Panc1 (cell line): ENCODE measurements at regions of chr9 and their contacts with region 1.

Region 1: GRCh38 chr9:35790385-35791296 is 750 bp upstream of the NPR2 start:
- DNase-seq: no peak
- ATAC-seq: peak; percentile 96
- H3K4me3 ChIP-seq: no peak overlapping the region
- H3K27ac ChIP-seq: no peak overlapping the region
- H3K4me1 ChIP-seq: 0 out of 2 replicates have a peak, but pooled peaks cover 3% of the 10 kb centered on the region
- H3K27me3 ChIP-seq: no peaks in the 10 kb centered on the region
- CTCF ChIP-seq: peak; percentile 94

Region 2: GRCh38 chr9:36045610-36046009 is 255.0 kb after region 1 on chr9:
- CTCF ChIA-PET with region 1: interaction called, 10 read pairs
- POLR2A ChIA-PET with region 1: no interaction called
- in situ Hi-C with region 1: no loop called
- intact Hi-C with region 1: no loop called
- DNase-seq: no peak
- ATAC-seq: no peak
- H3K4me3 ChIP-seq: no peak overlapping the region
- H3K27ac ChIP-seq: no peak overlapping the region
- H3K4me1 ChIP-seq: no peaks in the 10 kb centered on the region
- H3K27me3 ChIP-seq: no peaks in the 10 kb centered on the region
- CTCF ChIP-seq: no peak